CD8-positive, alpha-beta T cell (primary cell): ENCODE measurements at regions of chr9 and their contacts with region 1.

Region 1: GRCh38 chr9:98775831-98776441 is 20.4 kb downstream of the ANKS6 start:
- DNase-seq: peak in 4 of 9 experiments; percentile 28 to 59 (median 46)
- ATAC-seq: no peak
- H3K4me3 ChIP-seq: no peak overlapping the region
- H3K4me3 Mint-ChIP-seq: no peak overlapping the region
- H3K27ac ChIP-seq: no peak overlapping the region
- H3K27ac Mint-ChIP-seq: no peak overlapping the region
- H3K4me1 ChIP-seq: no peaks in the 10 kb centered on the region
- H3K4me1 Mint-ChIP-seq: no peaks in the 10 kb centered on the region
- H3K27me3 ChIP-seq: no peaks in the 10 kb centered on the region
- H3K27me3 Mint-ChIP-seq: no peaks in the 10 kb centered on the region
- CTCF ChIP-seq: no peak

Region 2: DNA sequence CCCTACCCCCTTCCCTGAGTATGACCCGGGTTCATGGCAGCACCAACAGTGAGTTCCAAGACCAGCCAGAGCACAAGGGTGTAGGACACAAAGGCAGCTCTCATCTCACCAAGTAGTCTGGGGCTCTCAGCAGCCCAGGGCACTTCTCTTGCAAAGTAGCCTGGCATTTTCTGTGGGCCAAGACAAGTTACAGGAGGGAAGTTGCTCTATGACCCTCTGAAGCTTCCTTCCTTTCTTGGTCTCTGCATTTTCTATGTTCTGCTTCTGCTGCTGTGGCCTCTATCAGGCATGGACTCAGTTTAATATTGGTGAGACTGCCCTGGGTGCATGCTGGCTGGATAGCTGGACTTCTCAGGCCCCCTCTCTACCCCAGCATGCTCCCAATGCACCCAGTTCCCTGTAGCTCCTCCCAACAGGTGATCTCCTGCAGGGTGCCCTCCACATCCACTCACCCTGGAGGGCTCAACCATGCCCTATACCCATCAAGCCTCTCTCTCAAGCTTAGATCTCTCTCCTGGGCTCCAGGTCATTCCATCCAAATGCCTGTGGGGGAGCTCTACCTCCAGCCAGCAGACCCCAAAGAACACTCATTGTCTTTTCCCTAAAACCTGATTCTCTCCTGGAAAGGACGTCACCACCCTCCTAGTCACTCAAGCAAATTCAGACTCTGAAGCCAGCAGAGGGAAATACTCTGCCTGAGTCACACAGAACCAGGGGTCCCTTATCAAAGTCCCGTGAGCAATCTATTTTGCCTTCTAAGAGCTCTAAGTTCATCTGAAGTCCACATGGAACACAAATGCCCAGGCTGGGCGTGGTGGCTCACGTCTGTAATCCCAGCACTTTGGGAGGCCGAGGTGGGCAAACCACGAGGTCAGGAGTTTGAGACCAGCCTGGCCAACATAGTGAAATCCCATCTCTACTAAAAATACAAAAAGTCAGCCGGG is 534.3 kb before region 1 on chr9:
- CTCF ChIA-PET with region 1: no interaction called
- POLR2A ChIA-PET with region 1: no interaction called
- intact Hi-C with region 1: no loop called
- DNase-seq: no peak
- ATAC-seq: no peak
- H3K4me3 ChIP-seq: no peak overlapping the region
- H3K4me3 Mint-ChIP-seq: no peak overlapping the region
- H3K27ac ChIP-seq: no peak overlapping the region
- H3K27ac Mint-ChIP-seq: no peak overlapping the region
- H3K4me1 ChIP-seq: no peaks in the 10 kb centered on the region
- H3K4me1 Mint-ChIP-seq: no peaks in the 10 kb centered on the region
- H3K27me3 ChIP-seq: no peaks in the 10 kb centered on the region
- H3K27me3 Mint-ChIP-seq: no peaks in the 10 kb centered on the region
- CTCF ChIP-seq: no peak

Region 3: DNA sequence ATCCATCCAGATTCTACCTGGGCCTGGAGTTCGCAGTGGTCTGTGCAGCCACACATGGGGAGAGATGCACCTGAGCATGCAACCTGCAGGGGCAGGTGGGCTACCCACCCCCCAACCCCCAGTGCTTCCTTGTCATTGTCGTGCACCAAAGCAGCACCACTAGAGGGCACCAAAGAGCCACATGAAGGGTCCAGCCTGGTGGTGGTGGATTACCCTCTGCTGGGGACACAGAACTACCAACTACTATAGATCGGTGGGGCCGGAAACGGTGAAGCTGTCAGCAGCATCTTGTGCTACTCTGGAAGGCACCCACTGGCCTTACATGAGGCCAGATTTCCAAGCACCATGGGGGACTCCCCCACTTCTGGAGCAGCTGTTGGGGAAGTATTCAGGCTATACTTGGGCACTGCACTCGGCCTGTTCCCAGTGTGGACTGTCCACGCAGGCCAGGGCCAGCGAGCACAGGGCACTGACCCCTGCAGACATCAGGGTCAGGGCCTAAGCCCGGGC is 460.3 kb before region 1 on chr9:
- CTCF ChIA-PET with region 1: interaction called, 20 read pairs
- POLR2A ChIA-PET with region 1: no interaction called
- intact Hi-C with region 1: loop called (anchors 5 kb)
- DNase-seq: peak; percentile 59 to 83 (median 77)
- ATAC-seq: peak; percentile 79
- H3K4me3 ChIP-seq: no peak overlapping the region
- H3K4me3 Mint-ChIP-seq: no peak overlapping the region
- H3K27ac ChIP-seq: no peak overlapping the region
- H3K27ac Mint-ChIP-seq: no peak overlapping the region
- H3K4me1 ChIP-seq: no peaks in the 10 kb centered on the region
- H3K4me1 Mint-ChIP-seq: peaks cover 4% of the 10 kb centered on the region
- H3K27me3 ChIP-seq: no peaks in the 10 kb centered on the region
- H3K27me3 Mint-ChIP-seq: no peaks in the 10 kb centered on the region
- CTCF ChIP-seq: peak; percentile 68